ENCODE measurements at regions of chr17 and their contacts with region 1.

Region 1: GRCh38 chr17:7136266-7136877 is 21.8 kb upstream of the ASGR2 start:
- DNase-seq: peak; percentile 70
- H3K4me3 ChIP-seq: peak overlapping the region in 1 of 2 experiments; percentile 36; a peak in 1 of 4 replicates
- H3K27ac ChIP-seq: no peak overlapping the region
- H3K4me1 ChIP-seq: no peaks in the 10 kb centered on the region
- H3K27me3 ChIP-seq: peaks cover 88% of the 10 kb centered on the region
- CTCF ChIP-seq: peak; percentile 99
- EP300 ChIP-seq: no peak
- RAD21 ChIP-seq: peak; percentile 86

Region 2: GRCh38 chr17:7060165-7060891 is 76.0 kb before region 1 on chr17:
- CTCF ChIA-PET with region 1: interaction called, 502 read pairs
- POLR2A ChIA-PET with region 1: no interaction called
- DNase-seq: no peak
- H3K4me3 ChIP-seq: no peak overlapping the region
- H3K27ac ChIP-seq: no peak overlapping the region
- H3K4me1 ChIP-seq: peaks cover 0 to 9% of the 10 kb centered on the region in 2 experiments; a peak in 1 of 4 replicates
- H3K27me3 ChIP-seq: peaks cover 58% of the 10 kb centered on the region
- CTCF ChIP-seq: no peak
- EP300 ChIP-seq: no peak
- RAD21 ChIP-seq: no peak

Region 3: DNA sequence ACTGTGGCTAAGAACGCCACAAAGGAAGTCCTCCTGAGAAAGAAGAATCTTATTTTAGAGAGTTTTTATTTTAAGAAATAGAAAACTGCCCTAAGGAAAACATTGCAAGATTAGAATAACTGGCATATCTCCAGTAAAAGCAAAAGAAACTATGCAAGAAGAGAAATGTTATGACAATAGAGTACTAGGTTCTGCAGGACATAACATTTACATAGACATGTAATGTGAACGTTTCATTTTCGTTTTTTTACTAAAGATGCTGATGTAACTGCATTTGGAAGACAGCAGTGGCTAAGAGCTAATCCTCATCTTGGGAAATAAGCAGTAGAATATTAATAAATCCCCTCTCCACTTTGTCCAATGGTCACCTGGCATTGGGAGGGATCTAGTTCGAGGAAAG is 14.0 kb before region 1 on chr17:
- CTCF ChIA-PET with region 1: interaction called, 14 read pairs
- POLR2A ChIA-PET with region 1: no interaction called
- DNase-seq: no peak
- H3K4me3 ChIP-seq: no peak overlapping the region
- H3K27ac ChIP-seq: no peak overlapping the region
- H3K4me1 ChIP-seq: no peaks in the 10 kb centered on the region
- H3K27me3 ChIP-seq: peaks cover 76% of the 10 kb centered on the region
- CTCF ChIP-seq: no peak
- EP300 ChIP-seq: no peak
- RAD21 ChIP-seq: no peak

Region 4: DNA sequence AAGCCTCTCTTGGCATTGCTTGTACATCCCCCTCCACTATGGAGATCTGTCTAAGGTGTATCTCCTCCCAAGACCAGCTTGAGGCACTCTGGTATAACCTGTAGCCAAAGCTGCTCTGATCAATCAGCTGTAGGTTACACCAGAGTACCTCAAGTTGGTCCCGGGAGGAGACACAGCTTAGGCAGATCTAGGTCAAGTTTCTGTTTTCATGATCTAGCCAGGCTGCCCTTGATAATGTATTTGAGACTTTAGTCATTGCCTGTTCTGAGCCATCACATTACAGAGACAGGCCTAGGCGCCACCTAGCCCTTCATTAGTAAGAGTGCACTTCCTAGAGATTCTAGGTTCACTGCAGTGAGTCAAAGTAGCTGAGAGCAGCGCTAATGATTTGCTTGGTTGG is 11.4 kb after region 1 on chr17:
- CTCF ChIA-PET with region 1: interaction called, 30 read pairs
- POLR2A ChIA-PET with region 1: no interaction called
- DNase-seq: no peak
- H3K4me3 ChIP-seq: no peak overlapping the region
- H3K27ac ChIP-seq: no peak overlapping the region
- H3K4me1 ChIP-seq: no peaks in the 10 kb centered on the region
- H3K27me3 ChIP-seq: peaks cover 73% of the 10 kb centered on the region
- CTCF ChIP-seq: no peak
- EP300 ChIP-seq: no peak
- RAD21 ChIP-seq: no peak

Measured in SK-N-SH (cell line).